Left colon (tissue), 2 donors: ENCODE measurements at regions of chr21 and their contacts with region 1.

Region 1: DNA sequence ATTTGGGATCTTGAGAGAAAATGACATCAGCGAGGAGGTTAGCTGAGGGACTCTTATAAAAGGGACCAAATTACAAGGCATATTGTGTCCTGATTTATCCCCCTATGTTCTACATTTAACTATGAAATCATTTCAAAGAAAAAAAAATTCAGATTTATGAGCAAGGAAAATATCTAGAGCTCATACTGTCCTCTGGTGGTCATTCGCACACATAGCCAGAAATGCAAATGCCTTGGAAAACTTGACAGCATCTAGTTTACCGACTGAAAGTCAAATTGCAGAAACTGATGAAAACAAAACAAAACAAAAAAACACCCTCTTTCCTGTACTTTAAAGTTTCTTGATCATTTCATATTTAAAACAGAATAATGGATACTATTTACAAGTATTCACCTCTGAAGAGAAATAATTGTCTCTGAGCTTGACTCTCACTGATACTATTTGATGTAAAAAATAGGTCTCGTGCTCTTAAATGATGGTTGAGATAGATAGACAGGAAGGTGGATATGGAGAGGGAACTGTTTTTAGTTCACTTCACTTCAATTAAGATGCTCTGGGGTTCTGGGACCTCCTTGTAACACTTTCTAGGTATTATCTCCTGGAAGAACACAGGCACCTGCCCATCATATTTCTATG is 253.8 kb downstream of the PCP4 start:
- DNase-seq: no peak
- ATAC-seq: no peak

Region 2: DNA sequence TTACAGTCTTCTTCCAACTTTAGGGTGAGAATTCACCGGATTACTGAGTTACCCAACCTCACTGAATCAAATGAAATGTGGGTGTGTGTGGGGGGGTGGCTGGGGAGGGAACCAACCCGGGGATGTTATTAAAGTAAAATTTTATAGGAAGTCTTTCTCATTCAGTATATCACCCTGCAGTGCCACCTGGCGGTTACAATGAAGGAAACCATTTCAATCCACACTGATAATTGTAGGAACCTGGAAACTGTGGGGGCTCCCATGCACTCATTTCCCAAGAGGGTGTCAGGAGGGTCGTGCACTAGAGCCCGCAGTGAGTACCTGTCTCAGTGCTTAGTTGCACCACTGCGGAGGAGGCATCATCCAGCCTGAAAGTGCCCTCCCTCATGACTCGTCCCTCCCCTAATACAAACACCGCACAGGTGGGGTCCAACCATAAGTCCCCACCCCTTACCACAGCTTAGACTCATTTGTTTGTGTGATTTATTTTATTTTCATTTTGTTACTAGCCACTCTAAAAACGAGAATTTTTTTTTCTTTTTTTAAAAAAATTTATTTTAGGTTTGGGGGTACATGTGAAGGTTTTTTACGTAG is 405.2 kb before region 1 on chr21:
- intact Hi-C with region 1: no loop called
- DNase-seq: peak; percentile 51 to 76
- ATAC-seq: peak; percentile 56

Region 3: DNA sequence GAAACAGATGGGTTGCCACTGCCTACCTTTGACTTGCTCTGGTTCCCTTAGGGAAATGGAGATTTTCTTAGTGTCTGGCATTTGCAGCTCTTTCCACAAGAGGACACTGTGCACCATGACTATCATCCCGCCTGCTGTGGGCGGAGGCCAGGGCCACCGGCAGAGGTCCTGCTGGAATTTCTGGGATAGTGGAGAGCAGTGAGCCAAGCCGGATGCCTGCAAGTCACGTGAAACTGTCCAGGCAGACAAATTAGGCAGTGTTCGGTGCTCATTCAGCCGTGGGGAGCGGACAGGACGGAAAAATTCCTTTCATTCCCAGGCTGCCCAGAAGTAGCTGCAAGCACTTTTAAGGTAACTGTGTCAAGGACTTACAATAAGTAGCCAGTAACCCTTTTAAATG is 332.7 kb before region 1 on chr21:
- intact Hi-C with region 1: loop called in 1 of 2 experiments (anchors 10 kb)
- DNase-seq: peak; percentile 56 to 58
- ATAC-seq: peak; percentile 96

Region 4: GRCh38 chr21:39867198-39867650 is 253.8 kb before region 1 on chr21 and contains the start of gene PCP4:
- intact Hi-C with region 1: loop called (anchors 5 to 10 kb)
- DNase-seq: peak; percentile 49 to 61
- ATAC-seq: peak; percentile 67
- total RNA-seq, gene PCP4: 0.64 to 6.5 TPM